Caco-2 (cell line): ENCODE measurements at regions of chr6 and their contacts with region 1.

Region 1: GRCh38 chr6:8958894-8959511 is 523.7 kb upstream of the SLC35B3 start:
- DNase-seq: peak in 1 of 2 experiments; percentile 61
- H3K4me3 ChIP-seq: no peak overlapping the region
- H3K4me3 Mint-ChIP-seq: no peak overlapping the region
- H3K27ac Mint-ChIP-seq: no peak overlapping the region
- H3K4me1 ChIP-seq: peaks cover 27% of the 10 kb centered on the region
- H3K4me1 Mint-ChIP-seq: peaks cover 7% of the 10 kb centered on the region
- H3K27me3 ChIP-seq: no peaks in the 10 kb centered on the region
- H3K27me3 Mint-ChIP-seq: no peaks in the 10 kb centered on the region
- CTCF ChIP-seq: no peak

Region 2: DNA sequence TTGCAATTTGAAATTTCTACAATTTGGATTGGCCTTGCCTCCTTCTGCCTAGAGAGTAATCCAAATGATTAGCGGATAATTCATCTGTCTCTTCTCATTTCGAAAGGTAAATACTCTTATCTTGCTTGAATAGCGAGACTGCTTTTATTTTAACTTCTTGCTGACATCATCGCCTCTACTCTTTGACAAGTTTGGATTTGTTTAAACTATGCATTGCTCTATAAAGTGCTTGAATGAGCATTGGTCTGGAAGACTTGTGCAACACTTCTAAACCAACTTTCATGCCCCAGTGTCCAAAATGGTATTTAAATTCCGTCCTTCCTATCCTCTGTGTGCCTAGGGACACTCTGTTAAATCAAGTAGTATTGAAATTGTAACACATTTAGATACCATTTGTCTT is 139.6 kb before region 1 on chr6:
- CTCF ChIA-PET with region 1: no interaction called
- POLR2A ChIA-PET with region 1: no interaction called
- intact Hi-C with region 1: loop called (anchors 1 kb)
- DNase-seq: peak in 1 of 2 experiments; percentile 53
- H3K4me3 ChIP-seq: no peak overlapping the region
- H3K4me3 Mint-ChIP-seq: no peak overlapping the region
- H3K27ac Mint-ChIP-seq: no peak overlapping the region
- H3K4me1 ChIP-seq: peaks cover 19% of the 10 kb centered on the region
- H3K4me1 Mint-ChIP-seq: peaks cover 21% of the 10 kb centered on the region
- H3K27me3 ChIP-seq: no peaks in the 10 kb centered on the region
- H3K27me3 Mint-ChIP-seq: no peaks in the 10 kb centered on the region
- CTCF ChIP-seq: no peak

Region 3: GRCh38 chr6:9308284-9308683 is 349.3 kb after region 1 on chr6:
- CTCF ChIA-PET with region 1: no interaction called
- POLR2A ChIA-PET with region 1: no interaction called
- intact Hi-C with region 1: loop called (anchors 2 kb)
- DNase-seq: peak in 1 of 2 experiments; percentile 55
- H3K4me3 ChIP-seq: no peak overlapping the region
- H3K4me3 Mint-ChIP-seq: no peak overlapping the region
- H3K27ac Mint-ChIP-seq: peak overlapping the region; percentile 57
- H3K4me1 ChIP-seq: peaks cover 22% of the 10 kb centered on the region
- H3K4me1 Mint-ChIP-seq: peaks cover 7% of the 10 kb centered on the region
- H3K27me3 ChIP-seq: no peaks in the 10 kb centered on the region
- H3K27me3 Mint-ChIP-seq: no peaks in the 10 kb centered on the region
- CTCF ChIP-seq: no peak